K562 (cell line): ENCODE measurements at regions of chr6 and their contacts with region 1.

Region 1: GRCh38 chr6:42901536-42901957 is 14.3 kb upstream of the PTCRA start:
- DNase-seq: peak; percentile 74 to 93 (median 77)
- ATAC-seq: peak; percentile 99
- H3K4me3 ChIP-seq: no peak overlapping the region
- H3K27ac ChIP-seq: no peak overlapping the region
- H3K4me1 ChIP-seq: peaks cover 0 to 7% of the 10 kb centered on the region in 2 experiments; a peak in 3 of 5 replicates
- H3K27me3 ChIP-seq: no peaks in the 10 kb centered on the region
- CTCF ChIP-seq: peak; percentile 91 to 98 (median 92)
- EP300 ChIP-seq: peak; percentile 39; the same call in 1 of the 2 replicates
- POLR2A ChIP-seq: no peak
- RAD21 ChIP-seq: peak; percentile 98 to 99

Region 2: GRCh38 chr6:42239351-42240055 is 662.0 kb before region 1 on chr6:
- CTCF ChIA-PET with region 1: no interaction called
- POLR2A ChIA-PET with region 1: no interaction called
- in situ Hi-C with region 1: no loop called
- intact Hi-C with region 1: no loop called
- DNase-seq: no peak
- ATAC-seq: peak; percentile 39; the same call in 2 of the 3 replicates
- H3K4me3 ChIP-seq: no peak overlapping the region
- H3K27ac ChIP-seq: no peak overlapping the region
- H3K4me1 ChIP-seq: peaks cover 4% of the 10 kb centered on the region in 2 experiments; a peak in 3 of 5 replicates
- H3K27me3 ChIP-seq: peaks cover 6 to 7% of the 10 kb centered on the region in 2 experiments; a peak in 4 of 5 replicates
- CTCF ChIP-seq: no peak
- EP300 ChIP-seq: no peak
- POLR2A ChIP-seq: no peak
- RAD21 ChIP-seq: no peak

Region 3: DNA sequence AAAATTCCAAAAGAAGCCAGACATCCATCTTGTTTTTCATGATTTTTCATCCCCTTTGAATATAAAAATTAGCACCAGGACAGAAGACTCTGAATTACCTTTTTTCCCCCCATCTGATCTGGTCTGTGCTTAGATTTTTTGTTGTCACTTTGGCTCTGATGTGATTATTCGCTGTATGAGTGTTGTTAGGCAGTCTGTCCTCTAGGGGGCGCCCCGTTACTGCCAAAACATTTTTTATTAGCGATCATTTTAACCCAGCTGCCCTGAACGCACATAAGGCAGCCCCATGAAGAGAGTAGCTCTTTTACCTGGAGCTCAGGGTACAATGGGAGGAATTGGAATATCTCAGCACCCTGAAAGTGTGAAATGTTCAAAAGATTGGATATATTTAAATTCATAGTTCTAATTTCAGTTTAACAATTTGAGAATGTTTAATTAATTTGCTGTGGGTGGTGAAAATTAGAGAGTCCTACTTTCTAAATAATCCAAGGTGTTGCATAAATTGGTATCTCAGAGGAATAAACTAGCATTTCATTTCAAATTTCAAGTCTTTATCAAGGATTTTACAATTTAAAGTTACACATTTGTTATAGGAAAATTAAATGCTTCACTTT is 239.9 kb before region 1 on chr6:
- CTCF ChIA-PET with region 1: interaction called, 26 read pairs
- POLR2A ChIA-PET with region 1: no interaction called
- in situ Hi-C with region 1: no loop called
- intact Hi-C with region 1: loop called (anchors 1 kb)
- DNase-seq: peak; percentile 68 to 84 (median 70)
- ATAC-seq: peak; percentile 97
- H3K4me3 ChIP-seq: no peak overlapping the region
- H3K27ac ChIP-seq: no peak overlapping the region
- H3K4me1 ChIP-seq: no peaks in the 10 kb centered on the region
- H3K27me3 ChIP-seq: no peaks in the 10 kb centered on the region
- CTCF ChIP-seq: peak; percentile 80 to 94 (median 89)
- EP300 ChIP-seq: 0 out of 2 replicates have a peak, but pooled peaks have one; percentile 7
- POLR2A ChIP-seq: no peak
- RAD21 ChIP-seq: peak; percentile 87 to 88

Region 4: DNA sequence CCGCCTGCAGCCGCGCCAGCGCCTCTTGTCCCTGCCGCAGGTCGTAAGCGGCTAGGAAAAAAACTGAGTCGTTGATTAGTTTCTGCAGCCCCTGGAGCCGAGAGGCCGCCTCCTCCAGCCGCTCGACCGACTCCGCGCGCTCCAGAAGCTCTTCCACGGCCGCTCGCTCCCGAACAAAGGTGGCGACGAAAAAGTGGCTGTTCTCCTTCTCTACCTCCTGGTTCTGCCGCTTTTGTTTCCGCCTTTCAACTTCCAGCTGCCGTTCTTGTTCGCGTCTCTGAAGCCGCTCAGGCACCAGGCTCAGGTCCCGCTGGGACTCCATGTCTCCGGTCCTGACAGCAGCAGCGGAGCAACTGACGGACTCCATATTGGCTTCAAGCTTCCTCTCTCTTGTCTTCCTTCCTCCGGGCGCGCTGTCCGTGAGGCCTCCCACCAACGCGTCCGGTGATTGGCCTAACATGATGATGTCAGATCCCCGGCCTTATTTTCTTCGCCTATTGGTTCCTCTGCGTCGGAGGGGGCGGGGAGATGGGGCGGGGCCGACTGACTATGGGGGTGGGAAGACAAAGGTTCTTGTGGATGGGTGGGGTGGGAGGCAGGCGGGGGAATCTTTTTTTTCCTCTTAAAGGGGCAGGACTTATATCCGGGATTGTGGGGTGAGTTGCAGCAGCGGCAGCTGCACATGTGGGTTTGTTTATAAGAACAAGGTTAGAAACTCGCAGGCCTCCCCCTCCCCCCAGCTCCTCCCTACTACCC is 155.7 kb before region 1 on chr6 and contains the start of gene TBCC:
- CTCF ChIA-PET with region 1: no interaction called
- POLR2A ChIA-PET with region 1: no interaction called
- in situ Hi-C with region 1: no loop called
- intact Hi-C with region 1: loop called (anchors 5 kb)
- DNase-seq: peak; percentile 98 to 100 (median 98)
- ATAC-seq: peak; percentile 83
- H3K4me3 ChIP-seq: peak within 1 kb of the TSS; percentile 90
- H3K27ac ChIP-seq: peak within 1 kb of the TSS; percentile 92
- H3K4me1 ChIP-seq: peaks cover 13 to 29% of the 10 kb centered on the region in 2 experiments
- H3K27me3 ChIP-seq: no peaks in the 10 kb centered on the region
- CTCF ChIP-seq: no peak
- EP300 ChIP-seq: no peak
- POLR2A ChIP-seq: peak; percentile 98
- RAD21 ChIP-seq: no peak
- polyA plus RNA-seq, gene TBCC: 2.8 to 5.0 TPM

Region 5: DNA sequence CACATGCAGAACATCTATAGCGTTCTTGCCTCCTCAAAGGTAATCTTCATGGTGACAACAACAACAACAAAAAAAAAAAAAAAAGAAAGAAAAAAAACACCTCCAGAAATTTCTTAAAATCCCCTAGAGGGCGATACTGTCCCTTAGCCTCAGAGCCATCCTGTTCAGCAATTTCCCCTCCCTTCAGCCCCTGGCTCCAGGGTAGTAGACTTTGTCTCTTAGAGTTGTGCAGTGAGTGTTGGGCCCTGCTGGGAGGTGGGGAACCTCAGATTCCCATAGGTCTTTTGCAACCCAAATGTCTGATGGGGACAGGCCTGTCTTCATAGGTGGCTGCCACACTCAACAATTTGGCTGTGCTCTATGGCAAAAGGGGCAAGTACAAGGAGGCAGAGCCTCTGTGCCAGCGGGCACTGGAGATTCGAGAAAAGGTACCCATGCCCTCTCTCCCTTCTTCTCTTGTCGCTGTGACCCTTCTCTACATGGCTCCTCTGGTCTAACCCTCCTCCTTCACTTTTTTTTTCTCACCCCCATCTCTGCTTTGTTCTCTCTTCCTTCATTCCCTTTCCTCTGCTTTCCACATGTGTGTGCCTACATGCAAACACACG is 168.6 kb after region 1 on chr6:
- CTCF ChIA-PET with region 1: no interaction called
- POLR2A ChIA-PET with region 1: no interaction called
- in situ Hi-C with region 1: no loop called
- intact Hi-C with region 1: loop called (anchors 1 kb)
- DNase-seq: peak; percentile 51 to 85 (median 68)
- ATAC-seq: peak; percentile 91
- H3K4me3 ChIP-seq: no peak overlapping the region
- H3K27ac ChIP-seq: no peak overlapping the region
- H3K4me1 ChIP-seq: no peaks in the 10 kb centered on the region
- H3K27me3 ChIP-seq: no peaks in the 10 kb centered on the region
- CTCF ChIP-seq: peak; percentile 69 to 94 (median 82)
- EP300 ChIP-seq: no peak
- POLR2A ChIP-seq: no peak
- RAD21 ChIP-seq: peak; percentile 68 to 77

Region 6: DNA sequence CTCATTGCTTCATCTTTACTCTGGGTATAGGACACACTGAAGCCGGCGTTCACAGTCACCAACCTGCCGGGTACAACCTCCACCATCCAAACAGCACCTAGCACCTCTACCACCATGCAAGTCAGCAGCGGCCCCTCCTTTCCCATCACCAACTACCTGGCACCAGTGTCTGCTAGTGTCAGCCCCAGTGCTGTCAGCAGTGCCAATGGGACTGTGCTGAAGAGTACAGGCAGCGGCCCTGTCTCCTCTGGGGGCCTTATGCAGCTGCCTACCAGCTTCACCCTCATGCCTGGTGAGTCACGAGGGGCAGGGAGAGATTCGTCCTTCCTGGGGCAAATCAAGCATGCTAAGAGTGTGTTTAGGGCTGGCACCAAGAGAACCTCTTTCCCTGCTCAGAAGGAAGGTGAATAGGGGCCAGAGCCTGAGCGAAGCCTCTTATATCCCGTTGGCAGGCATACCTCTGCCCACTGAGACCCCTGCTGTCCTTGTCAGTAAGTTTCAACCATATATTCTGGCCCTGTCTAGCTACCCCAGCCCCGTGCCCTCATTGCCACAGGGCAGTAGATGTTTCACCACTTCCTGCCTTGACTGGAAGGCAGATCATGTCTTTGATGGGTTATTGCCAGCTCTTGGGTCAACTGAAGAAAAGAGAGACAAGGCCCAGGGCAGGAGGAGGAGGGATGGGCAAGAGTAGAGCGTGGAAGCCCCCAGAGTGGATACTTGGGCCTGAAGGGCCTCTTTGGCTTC is 274.3 kb after region 1 on chr6:
- CTCF ChIA-PET with region 1: no interaction called
- POLR2A ChIA-PET with region 1: no interaction called
- in situ Hi-C with region 1: no loop called
- intact Hi-C with region 1: no loop called
- DNase-seq: no peak
- ATAC-seq: no peak
- H3K4me3 ChIP-seq: no peak overlapping the region
- H3K27ac ChIP-seq: no peak overlapping the region
- H3K4me1 ChIP-seq: peaks cover 36 to 54% of the 10 kb centered on the region in 2 experiments
- H3K27me3 ChIP-seq: no peaks in the 10 kb centered on the region
- CTCF ChIP-seq: no peak
- EP300 ChIP-seq: no peak
- POLR2A ChIP-seq: no peak
- RAD21 ChIP-seq: no peak

Region 7: DNA sequence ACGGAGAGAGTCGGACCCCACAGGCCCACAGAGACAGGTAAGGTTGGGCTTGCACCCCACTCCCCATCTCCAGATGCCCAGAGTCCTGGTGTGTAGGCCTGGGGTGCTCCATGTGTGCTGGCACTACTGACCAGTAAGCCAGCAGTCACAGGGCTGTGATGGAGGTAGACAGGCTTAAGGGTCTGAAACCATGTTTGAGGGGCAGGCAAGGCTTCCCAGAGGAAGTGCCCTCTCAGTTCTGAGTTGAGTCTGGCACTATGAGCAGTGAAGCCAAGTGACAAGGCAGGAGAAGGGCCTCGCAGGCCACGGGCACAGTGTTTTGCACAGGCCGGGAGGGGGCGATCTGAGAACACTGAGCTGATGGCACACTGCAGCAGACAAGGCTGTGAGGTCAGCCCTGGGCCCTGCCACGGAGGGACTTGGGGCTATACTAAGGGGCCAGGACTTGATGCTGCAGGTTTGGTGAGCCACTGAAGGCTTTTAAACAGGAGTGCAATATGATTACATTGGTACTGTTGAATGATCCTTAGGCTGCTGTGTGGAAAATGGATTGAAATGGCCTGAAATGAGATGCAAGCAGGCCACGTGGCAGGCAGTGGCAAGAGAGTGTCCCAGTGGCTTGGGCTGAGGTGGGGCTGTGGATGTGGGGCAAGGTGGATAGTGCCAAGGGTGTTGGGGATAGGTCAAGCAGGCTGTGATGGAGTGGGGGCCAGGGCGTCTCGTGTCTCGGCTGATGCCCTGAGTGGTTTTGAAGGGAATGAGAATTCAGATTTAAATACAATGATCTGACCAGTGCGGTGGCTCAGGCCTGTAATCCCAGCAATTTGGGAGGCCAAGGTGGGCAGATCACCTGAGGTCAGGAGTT is 362.0 kb after region 1 on chr6:
- CTCF ChIA-PET with region 1: no interaction called
- POLR2A ChIA-PET with region 1: no interaction called
- in situ Hi-C with region 1: no loop called
- intact Hi-C with region 1: loop called (anchors 10 kb)
- DNase-seq: peak; percentile 79 to 89 (median 83)
- ATAC-seq: peak; percentile 94
- H3K4me3 ChIP-seq: no peak overlapping the region
- H3K27ac ChIP-seq: no peak overlapping the region
- H3K4me1 ChIP-seq: peaks cover 16 to 40% of the 10 kb centered on the region in 2 experiments
- H3K27me3 ChIP-seq: peaks cover 5 to 15% of the 10 kb centered on the region in 2 experiments; a peak in 3 of 5 replicates
- CTCF ChIP-seq: peak; percentile 94 to 98 (median 96)
- EP300 ChIP-seq: no peak
- POLR2A ChIP-seq: no peak
- RAD21 ChIP-seq: peak; percentile 94 to 97

Region 8: GRCh38 chr6:43506667-43507471 is 605.3 kb after region 1 on chr6:
- CTCF ChIA-PET with region 1: no interaction called
- POLR2A ChIA-PET with region 1: no interaction called
- in situ Hi-C with region 1: loop called (anchors 5 kb)
- intact Hi-C with region 1: loop called (anchors 2 kb)
- DNase-seq: peak; percentile 82 to 94 (median 84)
- ATAC-seq: peak; percentile 87
- H3K4me3 ChIP-seq: no peak overlapping the region
- H3K27ac ChIP-seq: no peak overlapping the region
- H3K4me1 ChIP-seq: peaks cover 10 to 45% of the 10 kb centered on the region in 2 experiments; a peak in 4 of 5 replicates
- H3K27me3 ChIP-seq: peaks cover 0 to 6% of the 10 kb centered on the region in 2 experiments; a peak in 2 of 5 replicates
- CTCF ChIP-seq: peak; percentile 98
- EP300 ChIP-seq: no peak
- POLR2A ChIP-seq: no peak; the same call in 1 of the 2 replicates
- RAD21 ChIP-seq: peak; percentile 85 to 91